HCT116 (cell line): ENCODE measurements at regions of chr12 and their contacts with region 1.

Region 1: GRCh38 chr12:53220801-53221202 is 11.2 kb downstream of the RARG start:
- DNase-seq: peak; percentile 83
- ATAC-seq: peak; percentile 77
- H3K4me3 ChIP-seq: peak overlapping the region; percentile 72 to 88
- H3K27ac ChIP-seq: peak overlapping the region; percentile 99
- H3K4me1 ChIP-seq: peaks cover 58 to 87% of the 10 kb centered on the region in 2 experiments
- H3K27me3 ChIP-seq: no peaks in the 10 kb centered on the region
- CTCF ChIP-seq: no peak
- POLR2A ChIP-seq: peak; percentile 4
- RAD21 ChIP-seq: no peak

Region 2: DNA sequence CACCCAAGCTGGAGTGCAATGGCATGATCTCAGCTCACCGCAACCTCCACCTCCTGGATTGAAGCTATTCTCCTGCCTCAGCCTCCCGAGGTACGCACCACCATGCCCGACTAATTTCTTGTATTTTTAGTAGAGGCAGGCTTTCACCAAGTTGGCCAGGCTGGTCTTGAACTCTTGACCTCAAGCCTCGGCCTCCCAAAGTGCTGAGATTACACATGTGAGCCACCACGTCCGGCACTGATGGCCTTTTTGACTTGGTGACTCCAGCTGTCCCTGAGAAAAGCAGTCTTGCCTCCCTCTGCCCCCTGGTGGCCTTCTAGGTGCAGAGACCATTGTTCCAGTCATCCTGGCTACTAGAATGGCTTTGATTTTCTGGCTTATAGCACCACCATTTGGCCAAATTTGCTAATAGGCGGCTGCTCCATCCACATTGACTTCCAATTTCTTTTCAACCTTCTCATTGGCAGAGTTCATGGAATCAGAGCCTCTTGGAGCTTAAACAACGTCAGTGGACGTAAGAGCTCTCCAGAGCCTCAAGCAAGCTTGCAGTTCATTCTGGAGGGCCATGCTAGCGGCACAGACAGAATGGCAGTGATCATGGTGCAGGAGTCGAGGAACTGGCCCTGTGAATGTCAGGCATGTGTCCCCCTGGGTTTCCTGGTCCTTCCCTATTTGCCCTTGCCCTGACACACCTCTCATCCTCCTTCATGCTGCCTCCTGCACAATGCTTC is 239.9 kb before region 1 on chr12:
- CTCF ChIA-PET with region 1: no interaction called
- POLR2A ChIA-PET with region 1: no interaction called
- RAD21 ChIA-PET with region 1: no interaction called
- intact Hi-C with region 1: no loop called
- DNase-seq: peak; percentile 98
- ATAC-seq: peak; percentile 81
- H3K4me3 ChIP-seq: no peak overlapping the region
- H3K27ac ChIP-seq: peak overlapping the region; percentile 6; the same call in 1 of the 2 replicates
- H3K4me1 ChIP-seq: peaks cover 15 to 25% of the 10 kb centered on the region in 2 experiments; a peak in 3 of 4 replicates
- H3K27me3 ChIP-seq: no peaks in the 10 kb centered on the region
- CTCF ChIP-seq: peak in 2 of 3 experiments; percentile 98 to 100; a peak in 4 of 6 replicates
- POLR2A ChIP-seq: no peak
- RAD21 ChIP-seq: no peak

Region 3: DNA sequence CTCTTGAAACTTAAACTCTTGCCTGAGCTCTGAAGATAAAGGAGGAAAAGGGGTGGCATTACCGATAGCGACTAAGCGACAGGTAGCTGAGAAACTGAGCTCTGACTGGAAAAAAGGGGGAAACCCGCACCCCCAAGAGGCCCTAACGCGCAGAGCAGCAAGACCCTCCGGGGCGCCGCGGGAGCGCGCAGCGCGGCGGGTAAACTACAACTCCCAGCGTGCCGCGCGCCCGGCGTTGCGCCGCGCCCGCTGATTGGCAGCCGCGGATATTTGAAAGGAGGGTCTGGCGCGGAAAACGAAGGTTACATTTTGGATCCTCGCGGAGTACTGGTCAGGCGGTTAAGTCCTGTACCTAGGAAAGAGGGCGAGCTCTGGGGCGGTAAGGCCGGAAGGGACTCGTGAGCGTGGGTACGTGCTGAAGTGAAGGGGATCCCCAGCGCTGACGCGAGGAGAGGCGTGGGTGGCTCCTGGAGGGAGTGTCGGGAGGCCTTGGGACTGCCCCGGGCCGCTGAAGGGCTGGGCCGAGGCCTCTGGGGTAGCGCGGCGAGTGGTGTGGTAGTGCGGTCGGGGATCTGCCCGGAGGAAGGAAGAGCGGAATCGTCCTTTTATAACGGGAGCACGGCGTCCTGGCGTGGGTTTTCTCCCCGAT is 47.3 kb after region 1 on chr12 and contains the start of gene ESPL1:
- CTCF ChIA-PET with region 1: interaction called, 4 read pairs
- POLR2A ChIA-PET with region 1: interaction called, 3 read pairs
- RAD21 ChIA-PET with region 1: interaction called in 1 of 2 experiments, 3 read pairs
- intact Hi-C with region 1: loop called (anchors 1 kb)
- DNase-seq: peak; percentile 38
- ATAC-seq: peak; percentile 91
- H3K4me3 ChIP-seq: peak within 1 kb of the TSS; percentile 65 to 81
- H3K27ac ChIP-seq: peak within 1 kb of the TSS; percentile 61
- H3K4me1 ChIP-seq: peaks cover 11 to 28% of the 10 kb centered on the region in 2 experiments
- H3K27me3 ChIP-seq: no peaks in the 10 kb centered on the region
- CTCF ChIP-seq: peak in 1 of 3 experiments; percentile 33; a peak in 3 of 6 replicates
- POLR2A ChIP-seq: no peak
- RAD21 ChIP-seq: peak; percentile 53
- total RNA-seq, gene ESPL1: 50.3 TPM

Region 4: GRCh38 chr12:53500776-53501614 is 280.2 kb after region 1 on chr12 and contains the start of gene TARBP2:
- CTCF ChIA-PET with region 1: no interaction called
- POLR2A ChIA-PET with region 1: no interaction called
- RAD21 ChIA-PET with region 1: no interaction called
- intact Hi-C with region 1: no loop called
- DNase-seq: peak; percentile 99
- ATAC-seq: peak; percentile 78
- H3K4me3 ChIP-seq: peak within 1 kb of the TSS; percentile 75 to 87
- H3K27ac ChIP-seq: peak within 1 kb of the TSS; percentile 90
- H3K4me1 ChIP-seq: peaks cover 13 to 39% of the 10 kb centered on the region in 2 experiments
- H3K27me3 ChIP-seq: no peaks in the 10 kb centered on the region
- CTCF ChIP-seq: no peak
- POLR2A ChIP-seq: peak; percentile 76
- RAD21 ChIP-seq: no peak
- total RNA-seq, gene TARBP2: 40.1 TPM